GM10248 (cell line): ENCODE measurements at regions of chr4 and their contacts with region 1.

Region 1: DNA sequence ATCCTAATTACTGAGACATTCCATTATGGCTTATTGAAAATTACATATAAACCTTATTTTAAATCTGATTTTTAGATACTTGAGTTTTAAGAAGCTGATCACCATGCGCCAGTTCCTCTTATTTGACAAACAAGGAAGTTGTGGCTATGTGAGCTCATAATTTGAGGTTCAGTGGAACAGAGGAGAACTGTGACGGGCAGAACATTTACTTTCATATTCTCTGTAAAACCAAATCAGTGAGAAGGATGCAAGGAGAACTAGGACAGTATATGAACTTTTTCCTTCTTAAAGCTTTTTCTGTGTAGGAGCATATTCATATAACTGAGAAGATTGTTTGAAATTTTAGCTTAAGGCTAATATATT is 25.3 kb downstream of the STIM2 start:
- DNase-seq: peak; percentile 53
- CTCF ChIP-seq: no peak

Region 2: DNA sequence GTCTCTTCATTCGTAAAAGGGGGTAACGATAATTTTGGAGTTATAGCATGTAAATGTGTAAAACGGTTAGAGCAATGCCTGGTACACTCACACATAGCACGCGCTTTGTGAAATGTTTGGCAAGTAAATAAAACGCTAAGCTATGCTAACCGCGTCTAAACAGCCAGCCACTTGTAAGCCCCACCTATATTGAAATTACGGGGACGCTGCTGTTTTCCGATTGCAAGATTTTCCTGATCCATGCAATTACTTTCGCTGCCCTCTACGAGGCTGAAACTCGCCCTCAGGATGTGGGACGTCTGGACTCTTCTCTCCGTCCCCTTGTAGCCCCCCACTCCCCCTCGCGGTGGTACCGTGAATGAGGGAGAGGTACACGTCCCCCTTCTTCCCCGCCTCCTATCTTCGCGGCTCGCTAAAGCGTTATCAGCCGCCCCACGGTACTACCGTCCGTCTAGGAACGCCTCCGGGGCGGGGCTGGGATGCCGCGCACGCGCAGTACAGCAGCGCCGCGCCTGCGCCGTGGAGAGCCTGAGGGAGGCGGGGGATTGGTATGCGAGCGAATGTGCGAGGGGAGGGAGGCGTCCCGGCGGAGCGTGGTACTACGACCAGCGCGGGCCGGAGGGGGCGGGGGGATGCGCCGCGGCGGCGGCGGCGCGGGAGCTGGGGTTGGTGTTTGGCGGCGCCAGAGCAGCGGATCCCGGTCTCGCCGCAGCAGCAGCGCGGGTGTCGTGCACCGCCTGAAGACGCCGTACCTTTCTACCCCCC is 25.6 kb before region 1 on chr4 and contains the start of gene STIM2:
- CTCF ChIA-PET with region 1: interaction called, 13 read pairs
- POLR2A ChIA-PET with region 1: interaction called, 16 read pairs
- DNase-seq: peak; percentile 91
- CTCF ChIP-seq: peak; percentile 38

Region 3: DNA sequence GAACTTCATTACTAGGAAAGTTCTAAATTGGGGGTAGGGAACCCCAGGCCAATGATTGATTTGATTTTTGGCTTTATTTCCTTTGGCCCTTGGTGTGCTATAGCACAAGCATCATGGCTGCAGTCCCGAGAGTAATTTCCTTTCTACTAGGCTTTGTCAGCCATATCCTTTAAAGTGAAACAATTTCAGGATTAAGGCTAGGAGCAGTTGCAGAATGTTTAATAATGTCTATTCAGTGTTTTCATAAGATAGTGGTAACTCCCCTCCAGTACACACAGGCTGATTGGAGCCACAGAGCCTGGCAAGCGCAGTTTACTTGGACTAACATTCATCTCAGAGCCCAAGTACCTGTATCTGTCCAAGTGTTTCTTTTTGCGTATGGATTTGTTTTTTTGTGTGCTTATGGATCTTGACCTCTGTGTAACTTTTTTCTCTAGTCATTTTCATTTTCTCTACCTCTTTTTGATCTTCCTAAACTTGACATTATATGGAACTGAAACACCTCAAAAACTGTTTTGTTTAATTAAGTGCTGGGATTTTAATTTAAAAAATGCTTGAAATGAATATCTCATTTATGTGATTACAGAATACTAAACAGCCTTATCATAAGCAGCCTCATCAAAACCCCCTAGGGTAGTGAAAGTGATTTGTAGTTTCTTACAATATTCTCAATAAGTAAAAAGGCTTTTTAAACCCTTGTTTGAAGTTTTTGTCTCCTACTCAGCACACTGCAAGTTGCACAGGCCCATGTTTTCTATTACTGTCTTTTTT is 17.8 kb before region 1 on chr4:
- CTCF ChIA-PET with region 1: interaction called, 13 read pairs
- POLR2A ChIA-PET with region 1: no interaction called
- DNase-seq: no peak
- CTCF ChIP-seq: no peak